Activated CD4-positive, alpha-beta memory T cell treated with anti-CD3 and anti-CD28 coated beads for 36 hours (primary cell): ENCODE measurements at regions of chr1 and their contacts with region 1.

Region 1: GRCh38 chr1:176559878-176560277 is 96.9 kb downstream of the PAPPA2 start:
- DNase-seq: peak; percentile 23
- H3K4me3 Mint-ChIP-seq: no peak overlapping the region
- H3K27ac Mint-ChIP-seq: no peak overlapping the region
- H3K4me1 Mint-ChIP-seq: no peaks in the 10 kb centered on the region
- H3K27me3 Mint-ChIP-seq: peaks cover 2% of the 10 kb centered on the region

Region 2: GRCh38 chr1:176880954-176881595 is 321.2 kb after region 1 on chr1:
- CTCF ChIA-PET with region 1: interaction called, 4 read pairs
- POLR2A ChIA-PET with region 1: no interaction called
- intact Hi-C with region 1: loop called (anchors 2 kb)
- DNase-seq: peak; percentile 58
- H3K4me3 Mint-ChIP-seq: no peak overlapping the region
- H3K27ac Mint-ChIP-seq: no peak overlapping the region
- H3K4me1 Mint-ChIP-seq: no peaks in the 10 kb centered on the region
- H3K27me3 Mint-ChIP-seq: peaks cover 2% of the 10 kb centered on the region